Activated CD4-positive, alpha-beta memory T cell treated with anti-CD3 and anti-CD28 coated beads for 36 hours (primary cell): ENCODE measurements at regions of chr11 and their contacts with region 1.

Region 1: DNA sequence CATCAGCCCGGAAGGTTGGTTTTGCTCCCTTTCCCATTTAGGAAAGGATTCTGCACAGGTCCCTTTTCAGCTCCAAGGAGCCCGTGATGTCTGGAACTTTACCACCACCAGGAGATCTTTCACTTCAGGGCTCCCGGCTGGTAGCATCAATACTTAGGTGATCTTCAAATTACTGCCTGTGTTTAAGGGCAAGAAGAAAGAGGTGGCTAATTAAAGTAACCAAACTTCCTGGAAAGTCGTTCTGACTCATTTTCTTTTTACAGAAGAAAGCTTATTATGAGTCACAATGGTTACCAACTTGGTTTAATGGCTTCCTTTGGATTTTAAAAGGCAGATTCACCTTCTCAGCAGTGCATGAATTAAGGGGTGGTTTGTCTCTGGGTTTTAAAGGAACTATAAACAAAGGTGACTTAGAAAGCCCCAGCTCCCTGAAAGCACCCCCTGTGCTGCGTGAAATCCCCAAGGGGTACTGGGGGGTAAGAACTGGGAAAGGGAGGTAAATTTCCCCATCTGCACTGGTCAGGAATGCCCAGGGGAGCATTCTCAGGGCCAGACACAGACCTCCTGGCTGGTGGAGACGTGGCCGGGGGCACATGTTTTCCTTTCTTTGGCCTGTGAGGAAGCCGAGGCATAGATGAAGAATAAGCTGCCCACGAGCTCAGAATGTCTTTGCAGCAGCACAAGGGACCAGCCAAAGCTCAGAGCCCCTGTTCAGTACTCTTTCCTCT is 8.8 kb downstream of the POU2F3 start:
- DNase-seq: no peak
- H3K4me3 Mint-ChIP-seq: no peak overlapping the region
- H3K27ac Mint-ChIP-seq: no peak overlapping the region
- H3K4me1 Mint-ChIP-seq: peaks cover 29% of the 10 kb centered on the region
- H3K27me3 Mint-ChIP-seq: peaks cover 62% of the 10 kb centered on the region

Region 2: GRCh38 chr11:120235024-120235861 is 13.5 kb before region 1 on chr11:
- CTCF ChIA-PET with region 1: interaction called, 30 read pairs
- POLR2A ChIA-PET with region 1: no interaction called
- intact Hi-C with region 1: no loop called
- DNase-seq: peak; percentile 76
- H3K4me3 Mint-ChIP-seq: no peak overlapping the region
- H3K27ac Mint-ChIP-seq: no peak overlapping the region
- H3K4me1 Mint-ChIP-seq: peaks cover under 1% of the 10 kb centered on the region
- H3K27me3 Mint-ChIP-seq: peaks cover 51% of the 10 kb centered on the region